A673 (cell line): ENCODE measurements at regions of chr17 and their contacts with region 1.

Region 1: GRCh38 chr17:65794572-65794971 is 233.1 kb upstream of the AXIN2 start:
- DNase-seq: peak; percentile 52
- H3K4me3 ChIP-seq: no peak overlapping the region
- H3K27ac ChIP-seq: no peak overlapping the region
- H3K4me1 ChIP-seq: no peaks in the 10 kb centered on the region
- H3K27me3 ChIP-seq: no peaks in the 10 kb centered on the region
- CTCF ChIP-seq: peak; percentile 61

Region 2: DNA sequence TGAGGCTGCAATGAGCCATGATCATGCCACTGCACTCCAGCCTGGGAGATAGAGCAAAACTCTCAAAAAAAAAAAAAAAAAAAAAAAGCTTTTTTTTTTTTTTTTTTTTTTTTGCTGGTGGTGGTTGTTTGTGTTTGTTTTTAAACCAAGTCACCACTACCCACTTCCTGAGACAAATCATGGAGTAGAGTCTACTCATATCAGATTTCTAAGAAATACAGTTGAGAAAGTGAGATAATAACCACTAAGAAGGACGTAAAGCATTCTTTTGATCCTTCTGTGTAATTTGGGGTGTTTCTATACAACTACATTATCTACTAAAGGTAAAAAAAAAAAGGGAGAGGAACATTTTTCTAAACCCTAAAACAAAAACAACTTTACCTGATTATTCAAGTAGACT is 271.2 kb before region 1 on chr17:
- CTCF ChIA-PET with region 1: interaction called, 10 read pairs
- POLR2A ChIA-PET with region 1: no interaction called
- intact Hi-C with region 1: no loop called
- DNase-seq: no peak
- H3K4me3 ChIP-seq: no peak overlapping the region
- H3K27ac ChIP-seq: no peak overlapping the region
- H3K4me1 ChIP-seq: peaks cover 6% of the 10 kb centered on the region
- H3K27me3 ChIP-seq: no peaks in the 10 kb centered on the region
- CTCF ChIP-seq: no peak

Region 3: GRCh38 chr17:65813306-65813705 is 18.7 kb after region 1 on chr17:
- CTCF ChIA-PET with region 1: no interaction called
- POLR2A ChIA-PET with region 1: no interaction called
- intact Hi-C with region 1: no loop called
- DNase-seq: no peak
- H3K4me3 ChIP-seq: no peak overlapping the region
- H3K27ac ChIP-seq: no peak overlapping the region
- H3K4me1 ChIP-seq: no peaks in the 10 kb centered on the region
- H3K27me3 ChIP-seq: no peaks in the 10 kb centered on the region
- CTCF ChIP-seq: no peak